ENCODE measurements at regions of chr7 and their contacts with region 1.

Region 1: GRCh38 chr7:92833024-92833765 is 3.2 kb downstream of the CDK6 start:
- DNase-seq: peak; percentile 25 to 71 (median 35)
- ATAC-seq: peak; percentile 13; the same call in 1 of the 3 replicates
- H3K4me3 ChIP-seq: peak overlapping the region; percentile 56
- H3K27ac ChIP-seq: peak overlapping the region; percentile 90
- H3K4me1 ChIP-seq: peaks cover 0 to 31% of the 10 kb centered on the region in 2 experiments; a peak in 3 of 5 replicates
- H3K27me3 ChIP-seq: no peaks in the 10 kb centered on the region
- CTCF ChIP-seq: peak; percentile 43 to 69 (median 54)
- EP300 ChIP-seq: no peak
- POLR2A ChIP-seq: no peak
- RAD21 ChIP-seq: peak in 1 of 2 experiments; percentile 15; a peak in 2 of 4 replicates

Region 2: DNA sequence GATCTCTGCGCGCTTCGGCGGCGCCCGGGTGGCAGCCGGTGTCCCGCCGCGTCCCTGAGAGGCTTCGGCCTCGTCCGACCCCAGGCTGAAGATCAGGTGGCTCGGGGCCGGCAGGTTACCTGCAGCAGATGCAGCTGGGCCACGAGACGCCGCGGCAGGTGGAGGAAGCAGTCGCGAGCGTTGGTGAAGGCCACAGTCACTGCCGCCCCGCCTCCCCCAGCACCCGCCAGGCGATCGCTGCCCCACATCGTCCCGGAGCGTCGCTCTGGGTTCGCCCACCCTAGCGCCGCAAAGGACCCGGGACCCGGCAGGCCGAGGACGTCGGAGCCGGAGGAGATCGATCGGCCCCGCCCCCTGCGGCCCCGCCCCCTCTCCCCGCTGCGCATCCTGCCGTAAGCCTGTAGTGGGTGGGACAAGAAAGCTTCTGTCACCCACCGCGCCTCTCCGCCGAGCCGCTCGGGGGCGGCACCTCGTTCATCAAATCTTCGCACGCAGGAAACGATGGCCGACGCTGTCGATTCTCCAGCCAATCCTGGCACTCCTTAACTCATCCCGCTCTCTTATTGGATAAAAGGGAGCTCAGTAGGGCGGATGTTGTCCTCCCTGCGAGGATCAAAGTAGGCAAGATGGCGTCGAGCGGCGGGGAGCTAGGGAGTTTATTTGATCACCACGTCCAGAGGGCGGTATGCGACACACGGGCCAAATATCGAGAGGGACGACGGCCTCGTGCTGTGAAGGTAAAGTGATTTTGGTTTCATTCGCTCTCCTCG is 304.8 kb before region 1 on chr7 and contains the starts of genes PEX1 and RBM48:
- CTCF ChIA-PET with region 1: no interaction called
- POLR2A ChIA-PET with region 1: no interaction called
- in situ Hi-C with region 1: no loop called
- intact Hi-C with region 1: loop called (anchors 5 kb)
- DNase-seq: peak; percentile 94 to 100 (median 98)
- ATAC-seq: peak; percentile 97
- H3K4me3 ChIP-seq: peak within 1 kb of the TSS; percentile 84
- H3K27ac ChIP-seq: peak within 1 kb of the TSS; percentile 98
- H3K4me1 ChIP-seq: peaks cover 7 to 10% of the 10 kb centered on the region in 2 experiments; a peak in 3 of 5 replicates
- H3K27me3 ChIP-seq: no peaks in the 10 kb centered on the region
- CTCF ChIP-seq: peak; percentile 64 to 67 (median 66)
- EP300 ChIP-seq: peak; percentile 54
- POLR2A ChIP-seq: peak; percentile 96
- RAD21 ChIP-seq: peak; percentile 19 to 23; a peak in 1 of 4 replicates
- polyA plus RNA-seq, gene PEX1: 9.4 to 10.3 TPM
- polyA plus RNA-seq, gene RBM48: 20.9 to 35.1 TPM

Region 3: DNA sequence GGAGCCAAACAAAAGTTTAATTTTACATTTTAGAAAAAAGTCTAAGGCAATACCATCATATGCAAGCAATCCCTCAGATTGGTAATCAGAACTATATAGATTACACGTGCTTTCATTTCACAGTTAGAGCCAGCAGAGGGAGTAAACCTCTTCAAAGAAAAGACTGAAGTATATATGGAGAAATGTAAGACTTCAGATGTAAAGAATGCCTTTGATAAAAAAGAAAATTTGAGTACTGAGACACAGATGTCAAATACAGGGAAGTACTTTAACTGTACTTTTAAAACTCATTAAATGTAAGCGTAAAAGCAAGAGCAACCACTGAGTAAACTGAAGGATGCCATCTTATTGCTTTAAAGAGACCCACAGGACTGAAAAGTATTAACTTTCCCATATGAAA is 141.6 kb before region 1 on chr7:
- CTCF ChIA-PET with region 1: interaction called, 3 read pairs
- POLR2A ChIA-PET with region 1: no interaction called
- in situ Hi-C with region 1: no loop called
- intact Hi-C with region 1: loop called (anchors 2 kb)
- DNase-seq: peak; percentile 26 to 43 (median 32)
- ATAC-seq: peak; percentile 86
- H3K4me3 ChIP-seq: no peak overlapping the region
- H3K27ac ChIP-seq: no peak overlapping the region
- H3K4me1 ChIP-seq: peaks cover 7 to 11% of the 10 kb centered on the region in 2 experiments; a peak in 3 of 5 replicates
- H3K27me3 ChIP-seq: no peaks in the 10 kb centered on the region
- CTCF ChIP-seq: peak; percentile 25 to 63 (median 28); a peak in 3 of 6 replicates
- EP300 ChIP-seq: no peak
- POLR2A ChIP-seq: no peak
- RAD21 ChIP-seq: peak; percentile 55 to 77

Region 4: GRCh38 chr7:93006480-93007095 is 173.4 kb after region 1 on chr7:
- CTCF ChIA-PET with region 1: no interaction called
- POLR2A ChIA-PET with region 1: no interaction called
- in situ Hi-C with region 1: no loop called
- intact Hi-C with region 1: loop called (anchors 5 kb)
- DNase-seq: peak in 2 of 4 experiments; percentile 34 to 75
- ATAC-seq: peak; percentile 58
- H3K4me3 ChIP-seq: no peak overlapping the region
- H3K27ac ChIP-seq: peak overlapping the region; percentile 57; the same call in 1 of the 3 replicates
- H3K4me1 ChIP-seq: peaks cover 14 to 35% of the 10 kb centered on the region in 2 experiments; a peak in 4 of 5 replicates
- H3K27me3 ChIP-seq: no peaks in the 10 kb centered on the region
- CTCF ChIP-seq: no peak
- EP300 ChIP-seq: peak; percentile 17; the same call in 1 of the 2 replicates
- POLR2A ChIP-seq: no peak
- RAD21 ChIP-seq: no peak

Region 5: DNA sequence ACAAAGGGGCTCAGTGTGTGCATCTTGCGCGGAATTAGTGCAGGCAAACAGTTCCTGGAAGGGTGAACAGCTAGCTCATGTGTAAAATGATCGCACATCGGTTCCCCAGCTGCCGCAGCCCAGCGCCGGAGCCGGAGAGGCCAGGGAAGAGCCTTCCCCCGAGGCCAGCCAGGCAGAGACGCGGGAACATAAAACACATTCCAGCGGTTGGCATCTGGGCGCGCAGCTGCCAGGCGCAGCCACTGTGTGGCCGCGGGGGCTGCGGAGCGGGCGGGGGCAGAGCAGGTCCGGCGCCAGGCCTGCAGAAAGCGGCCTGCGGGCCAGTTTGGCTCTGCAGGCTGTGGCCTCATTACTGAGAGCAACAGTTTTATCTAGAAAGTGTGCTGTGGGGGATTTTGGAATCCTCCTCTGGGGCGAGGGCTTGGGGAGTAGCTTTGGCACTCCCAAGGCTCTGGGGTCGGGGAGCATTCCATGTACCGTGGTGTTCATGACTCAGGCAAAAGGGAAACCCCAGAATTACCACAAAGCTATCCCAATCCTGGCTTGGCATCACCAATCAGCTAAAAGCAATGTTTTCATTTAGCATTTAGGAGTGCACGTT is 210.3 kb after region 1 on chr7:
- CTCF ChIA-PET with region 1: no interaction called
- POLR2A ChIA-PET with region 1: no interaction called
- in situ Hi-C with region 1: no loop called
- intact Hi-C with region 1: loop called (anchors 2 kb)
- DNase-seq: no peak
- ATAC-seq: no peak
- H3K4me3 ChIP-seq: no peak overlapping the region
- H3K27ac ChIP-seq: no peak overlapping the region
- H3K4me1 ChIP-seq: peaks cover 21 to 22% of the 10 kb centered on the region in 2 experiments
- H3K27me3 ChIP-seq: no peaks in the 10 kb centered on the region
- CTCF ChIP-seq: no peak
- EP300 ChIP-seq: no peak
- POLR2A ChIP-seq: no peak
- RAD21 ChIP-seq: no peak

Measured in K562 (cell line).